ENCODE measurements at regions of chr4 and their contacts with region 1.

Region 1: GRCh38 chr4:8428293-8429097 is 12.0 kb downstream of the ACOX3 start:
- DNase-seq: peak; percentile 63
- ATAC-seq: peak; percentile 93
- H3K4me3 ChIP-seq: peak overlapping the region; percentile 78 to 81
- H3K27ac ChIP-seq: no peak overlapping the region; the same call in 1 of the 2 replicates
- H3K4me1 ChIP-seq: peaks cover 5 to 16% of the 10 kb centered on the region in 2 experiments; a peak in 2 of 4 replicates
- H3K27me3 ChIP-seq: no peaks in the 10 kb centered on the region
- CTCF ChIP-seq: peak; percentile 7 to 62 (median 53); a peak in 4 of 6 replicates
- POLR2A ChIP-seq: peak; percentile 38
- RAD21 ChIP-seq: no peak

Region 2: GRCh38 chr4:8330821-8331574 is 97.5 kb before region 1 on chr4:
- CTCF ChIA-PET with region 1: no interaction called
- POLR2A ChIA-PET with region 1: no interaction called
- RAD21 ChIA-PET with region 1: no interaction called
- intact Hi-C with region 1: no loop called
- DNase-seq: no peak
- ATAC-seq: no peak
- H3K4me3 ChIP-seq: no peak overlapping the region
- H3K27ac ChIP-seq: no peak overlapping the region
- H3K4me1 ChIP-seq: no peaks in the 10 kb centered on the region
- H3K27me3 ChIP-seq: no peaks in the 10 kb centered on the region
- CTCF ChIP-seq: no peak
- POLR2A ChIP-seq: no peak
- RAD21 ChIP-seq: no peak

Region 3: DNA sequence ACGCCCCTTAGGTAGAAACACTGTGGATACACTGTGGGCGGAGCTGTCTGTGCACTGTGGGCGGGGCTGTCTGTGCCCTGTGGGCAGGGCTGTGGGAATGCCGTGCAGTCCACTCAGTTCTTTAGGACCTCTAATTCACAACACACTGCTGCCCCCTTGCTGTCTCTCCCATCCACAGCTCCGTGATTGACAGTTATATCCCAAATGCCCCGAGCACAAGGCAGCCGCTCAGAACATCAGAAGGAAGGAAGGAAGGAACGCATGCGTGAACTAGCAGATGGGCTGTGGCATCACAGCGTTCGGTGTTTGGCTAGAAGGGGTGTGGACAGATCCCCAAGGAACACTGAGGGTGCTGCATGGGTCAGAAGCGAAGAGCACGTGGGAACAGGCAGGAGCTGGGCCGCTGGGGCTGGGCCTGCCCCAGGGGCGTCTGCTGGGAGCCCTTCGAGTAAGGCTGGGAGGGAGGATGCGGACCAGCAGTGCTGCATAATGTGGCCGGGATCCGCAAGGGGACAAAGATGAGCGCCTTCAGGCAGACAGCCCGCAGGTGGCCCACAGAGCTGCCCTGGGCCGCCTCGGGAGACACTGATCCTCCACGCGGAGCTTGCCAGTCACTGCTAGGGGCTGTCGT is 17.7 kb before region 1 on chr4:
- CTCF ChIA-PET with region 1: interaction called, 10 read pairs
- POLR2A ChIA-PET with region 1: no interaction called
- RAD21 ChIA-PET with region 1: no interaction called
- intact Hi-C with region 1: no loop called
- DNase-seq: peak; percentile 81
- ATAC-seq: peak; percentile 94
- H3K4me3 ChIP-seq: no peak overlapping the region
- H3K27ac ChIP-seq: no peak overlapping the region
- H3K4me1 ChIP-seq: peaks cover 12 to 15% of the 10 kb centered on the region in 2 experiments; a peak in 3 of 4 replicates
- H3K27me3 ChIP-seq: no peaks in the 10 kb centered on the region
- CTCF ChIP-seq: peak; percentile 61 to 67 (median 66)
- POLR2A ChIP-seq: no peak
- RAD21 ChIP-seq: peak; percentile 76

Region 4: GRCh38 chr4:8440492-8441341 is 12.2 kb after region 1 on chr4 and contains the starts of genes ACOX3 and TRMT44:
- CTCF ChIA-PET with region 1: interaction called, 3 read pairs
- POLR2A ChIA-PET with region 1: interaction called, 3 read pairs
- RAD21 ChIA-PET with region 1: no interaction called
- intact Hi-C with region 1: loop called (anchors 1 kb)
- DNase-seq: peak; percentile 78
- ATAC-seq: peak; percentile 93
- H3K4me3 ChIP-seq: peak within 1 kb of the TSS; percentile 87 to 99
- H3K27ac ChIP-seq: peak within 1 kb of the TSS; percentile 78
- H3K4me1 ChIP-seq: peaks cover 11 to 19% of the 10 kb centered on the region in 2 experiments; a peak in 3 of 4 replicates
- H3K27me3 ChIP-seq: no peaks in the 10 kb centered on the region
- CTCF ChIP-seq: no peak
- POLR2A ChIP-seq: peak; percentile 63
- RAD21 ChIP-seq: no peak
- total RNA-seq, gene ACOX3: 16.9 TPM
- total RNA-seq, gene TRMT44: 25.8 TPM

Region 5: GRCh38 chr4:8665406-8666360 is 237.2 kb after region 1 on chr4:
- CTCF ChIA-PET with region 1: no interaction called
- POLR2A ChIA-PET with region 1: no interaction called
- RAD21 ChIA-PET with region 1: no interaction called
- intact Hi-C with region 1: no loop called
- DNase-seq: no peak
- ATAC-seq: no peak
- H3K4me3 ChIP-seq: no peak overlapping the region
- H3K27ac ChIP-seq: no peak overlapping the region
- H3K4me1 ChIP-seq: peaks cover 0 to 8% of the 10 kb centered on the region in 2 experiments; a peak in 1 of 4 replicates
- H3K27me3 ChIP-seq: peaks cover 31% of the 10 kb centered on the region
- CTCF ChIP-seq: no peak
- POLR2A ChIP-seq: no peak
- RAD21 ChIP-seq: no peak